Activated CD8-positive, alpha-beta T cell treated with anti-CD3 and anti-CD28 coated beads for 36 hours (primary cell): ENCODE measurements at regions of chrX and their contacts with region 1.

Region 1: GRCh38 chrX:130079824-130080406 is 30.4 kb downstream of the ELF4 start:
- DNase-seq: peak; percentile 69
- ATAC-seq: no peak
- H3K4me3 Mint-ChIP-seq: no peak overlapping the region
- H3K27ac Mint-ChIP-seq: peak overlapping the region; percentile 25
- H3K4me1 Mint-ChIP-seq: peaks cover 47% of the 10 kb centered on the region
- H3K27me3 Mint-ChIP-seq: no peaks in the 10 kb centered on the region
- CTCF ChIP-seq: peak; percentile 72

Region 2: DNA sequence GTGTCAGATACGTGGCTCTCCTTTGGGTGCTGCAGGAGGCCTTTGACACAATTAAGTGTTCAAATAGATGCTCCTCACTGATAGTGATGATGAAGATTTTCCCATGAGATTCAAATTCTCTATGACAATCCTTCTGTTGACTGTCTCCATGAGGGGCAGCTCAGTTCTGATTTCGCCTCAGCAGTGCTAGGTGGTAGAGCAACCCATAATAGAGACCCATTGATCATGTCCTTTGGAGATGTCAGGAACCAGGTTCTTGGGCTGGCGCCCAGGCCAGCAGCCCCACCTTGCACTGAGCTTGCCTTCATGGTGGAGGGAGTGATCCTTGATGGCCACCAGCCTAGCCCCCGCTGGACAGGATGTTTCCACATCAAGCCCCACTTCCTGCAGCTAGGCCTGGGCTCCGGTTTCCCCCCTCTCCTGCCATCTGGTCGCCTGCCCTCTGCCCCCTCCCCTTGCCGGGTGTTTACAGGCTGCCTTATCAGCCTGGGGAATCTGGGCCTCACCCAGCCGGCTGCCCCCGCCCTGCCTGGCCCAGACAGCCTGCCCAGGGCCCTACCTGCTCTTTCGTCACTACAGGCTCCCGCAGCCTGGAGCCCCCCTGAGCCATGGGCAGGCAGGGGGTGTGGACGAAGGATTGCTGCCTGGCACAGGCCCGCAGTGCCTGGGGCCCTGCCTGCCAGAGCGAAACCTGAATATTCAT is 17.7 kb after region 1 on chrX:
- CTCF ChIA-PET with region 1: interaction called, 14 read pairs
- POLR2A ChIA-PET with region 1: interaction called, 10 read pairs
- intact Hi-C with region 1: no loop called
- DNase-seq: peak; percentile 23
- ATAC-seq: peak; percentile 59
- H3K4me3 Mint-ChIP-seq: no peak overlapping the region
- H3K27ac Mint-ChIP-seq: peak overlapping the region; percentile 81
- H3K4me1 Mint-ChIP-seq: peaks cover 65% of the 10 kb centered on the region
- H3K27me3 Mint-ChIP-seq: no peaks in the 10 kb centered on the region
- CTCF ChIP-seq: no peak

Region 3: DNA sequence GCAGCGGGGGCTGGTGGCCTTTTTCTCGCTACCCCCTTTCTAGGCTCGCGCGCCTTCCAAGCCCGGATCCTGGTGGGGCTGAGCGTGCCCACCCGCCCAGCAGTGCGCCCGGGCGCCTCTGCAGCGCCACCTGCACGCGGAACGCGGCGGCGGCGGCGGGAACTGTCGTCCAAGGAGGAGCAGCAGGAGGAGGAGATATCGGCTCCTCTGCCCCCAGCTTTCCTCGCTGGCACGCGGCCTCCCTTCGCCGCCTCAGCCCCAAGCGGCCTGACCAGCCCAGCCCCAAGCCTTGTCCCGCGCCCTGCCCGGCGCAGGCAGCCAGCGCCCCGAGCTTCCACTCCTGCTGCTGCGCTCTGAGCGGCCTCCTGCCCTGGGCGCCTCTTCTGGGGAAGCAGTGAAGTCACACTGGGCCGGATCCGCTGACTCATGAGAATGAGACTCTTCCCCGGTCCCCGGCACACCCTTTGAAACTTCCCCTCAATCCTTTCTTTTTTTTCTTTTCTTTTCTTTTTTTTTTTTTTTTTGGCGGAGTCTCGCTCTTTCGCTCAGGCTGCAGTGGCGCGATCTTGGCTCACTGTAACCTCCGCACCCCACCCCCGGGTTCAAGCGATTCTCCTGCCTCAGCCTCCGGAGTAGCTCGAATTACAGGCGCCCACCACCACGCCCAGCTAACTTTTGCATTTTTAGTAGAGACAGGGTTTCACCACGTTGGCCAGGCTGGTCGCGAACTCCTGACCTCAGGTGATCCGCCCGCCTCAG is 41.0 kb after region 1 on chrX:
- CTCF ChIA-PET with region 1: interaction called, 87 read pairs
- POLR2A ChIA-PET with region 1: interaction called, 26 read pairs
- intact Hi-C with region 1: loop called (anchors 2 kb)
- DNase-seq: peak; percentile 74
- ATAC-seq: peak; percentile 83
- H3K4me3 Mint-ChIP-seq: peak overlapping the region; percentile 59
- H3K27ac Mint-ChIP-seq: peak overlapping the region; percentile 63
- H3K4me1 Mint-ChIP-seq: peaks cover 22% of the 10 kb centered on the region
- H3K27me3 Mint-ChIP-seq: no peaks in the 10 kb centered on the region
- CTCF ChIP-seq: peak; percentile 60

Region 4: DNA sequence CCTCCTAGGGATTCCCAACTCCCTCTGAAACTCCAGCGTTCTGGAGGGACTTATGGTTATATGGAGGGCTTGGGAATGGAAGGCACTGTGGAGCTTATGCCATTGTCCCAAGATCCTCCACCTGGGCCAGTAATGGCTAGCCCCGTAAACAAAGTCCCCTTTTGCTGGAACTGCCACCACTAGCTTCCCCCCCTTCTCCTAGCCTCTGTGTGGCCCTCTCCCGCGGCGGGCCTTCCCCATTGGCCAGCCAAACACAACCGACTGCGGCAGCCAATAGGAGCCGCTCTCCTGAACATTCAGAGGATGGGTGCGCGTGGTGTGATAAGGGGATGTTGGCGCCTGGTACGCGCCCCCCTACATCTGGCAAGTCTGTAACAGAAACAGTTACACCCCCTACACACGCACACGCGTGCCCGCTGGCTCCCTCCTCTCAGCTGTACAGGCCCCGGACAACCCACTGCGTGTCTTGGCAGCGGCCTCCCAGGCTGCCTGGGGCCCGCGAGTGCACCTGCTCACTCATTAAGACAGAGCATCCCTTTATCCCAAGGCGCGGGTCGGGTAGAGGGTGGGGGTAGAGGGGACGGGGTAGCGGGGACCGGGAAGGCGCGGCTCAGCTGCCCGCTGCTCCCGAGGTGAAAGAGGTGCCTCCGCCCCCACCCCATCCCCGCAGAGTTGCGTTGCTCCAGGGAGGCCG is 91.0 kb after region 1 on chrX:
- CTCF ChIA-PET with region 1: interaction called, 12 read pairs
- POLR2A ChIA-PET with region 1: interaction called, 3 read pairs
- intact Hi-C with region 1: loop called (anchors 5 kb)
- DNase-seq: peak; percentile 85
- ATAC-seq: peak; percentile 81
- H3K4me3 Mint-ChIP-seq: peak overlapping the region; percentile 93
- H3K27ac Mint-ChIP-seq: peak overlapping the region; percentile 92
- H3K4me1 Mint-ChIP-seq: peaks cover 30% of the 10 kb centered on the region
- H3K27me3 Mint-ChIP-seq: no peaks in the 10 kb centered on the region
- CTCF ChIP-seq: no peak

Region 5: DNA sequence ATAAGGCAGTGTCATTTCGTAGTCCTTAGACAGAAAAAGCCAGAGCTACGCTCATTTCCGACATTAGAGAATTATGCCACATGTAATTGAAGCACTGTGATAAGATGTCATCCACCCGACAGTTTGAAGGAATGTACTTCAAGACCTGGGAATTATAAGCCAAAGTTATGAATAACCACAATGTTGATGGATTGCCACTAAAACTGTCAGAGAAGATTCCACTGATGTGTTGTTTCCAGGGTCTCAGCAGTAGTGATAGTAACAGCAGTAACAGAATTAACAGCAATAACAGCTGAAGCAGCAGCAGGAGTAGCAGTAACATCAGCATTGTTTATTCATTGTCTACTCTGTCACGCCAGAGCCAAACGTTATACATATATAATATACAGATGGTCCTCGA is 116.6 kb after region 1 on chrX:
- CTCF ChIA-PET with region 1: interaction called, 49 read pairs
- POLR2A ChIA-PET with region 1: no interaction called
- intact Hi-C with region 1: loop called (anchors 5 kb)
- DNase-seq: no peak
- ATAC-seq: no peak
- H3K4me3 Mint-ChIP-seq: no peak overlapping the region
- H3K27ac Mint-ChIP-seq: no peak overlapping the region
- H3K4me1 Mint-ChIP-seq: no peaks in the 10 kb centered on the region
- H3K27me3 Mint-ChIP-seq: no peaks in the 10 kb centered on the region
- CTCF ChIP-seq: no peak